PC-3 (cell line): ENCODE measurements at regions of chr2 and their contacts with region 1.

Region 1: GRCh38 chr2:159615140-159615951 is 1.0 kb downstream of the BAZ2B start:
- DNase-seq: peak; percentile 86
- ATAC-seq: peak; percentile 85
- H3K4me3 ChIP-seq: peak overlapping the region; percentile 88
- H3K27ac ChIP-seq: peak overlapping the region; percentile 81
- H3K4me1 ChIP-seq: peaks cover 35% of the 10 kb centered on the region
- H3K27me3 ChIP-seq: no peaks in the 10 kb centered on the region
- CTCF ChIP-seq: no peak

Region 2: GRCh38 chr2:159286709-159287441 is 328.5 kb before region 1 on chr2:
- CTCF ChIA-PET with region 1: no interaction called
- POLR2A ChIA-PET with region 1: no interaction called
- intact Hi-C with region 1: loop called (anchors 5 kb)
- DNase-seq: peak; percentile 98
- ATAC-seq: peak; percentile 91
- H3K4me3 ChIP-seq: peak overlapping the region; percentile 96
- H3K27ac ChIP-seq: 0 out of 2 replicates have a peak overlapping the region, but pooled peaks have one; percentile 4
- H3K4me1 ChIP-seq: peaks cover 17% of the 10 kb centered on the region; the same call in 1 of the 2 replicates
- H3K27me3 ChIP-seq: no peaks in the 10 kb centered on the region
- CTCF ChIP-seq: no peak

Region 3: GRCh38 chr2:159557451-159558034 is 57.8 kb before region 1 on chr2:
- CTCF ChIA-PET with region 1: interaction called, 12 read pairs
- POLR2A ChIA-PET with region 1: interaction called, 12 read pairs
- intact Hi-C with region 1: no loop called
- DNase-seq: peak; percentile 47
- ATAC-seq: peak; percentile 67
- H3K4me3 ChIP-seq: no peak overlapping the region
- H3K27ac ChIP-seq: no peak overlapping the region
- H3K4me1 ChIP-seq: no peaks in the 10 kb centered on the region
- H3K27me3 ChIP-seq: no peaks in the 10 kb centered on the region
- CTCF ChIP-seq: peak; percentile 70

Region 4: GRCh38 chr2:159600752-159601151 is 14.6 kb before region 1 on chr2:
- CTCF ChIA-PET with region 1: interaction called, 3 read pairs
- POLR2A ChIA-PET with region 1: interaction called, 11 read pairs
- intact Hi-C with region 1: no loop called
- DNase-seq: peak; percentile 92
- ATAC-seq: peak; percentile 98
- H3K4me3 ChIP-seq: peak overlapping the region; percentile 29; the same call in 1 of the 2 replicates
- H3K27ac ChIP-seq: peak overlapping the region; percentile 50
- H3K4me1 ChIP-seq: peaks cover 15% of the 10 kb centered on the region
- H3K27me3 ChIP-seq: no peaks in the 10 kb centered on the region
- CTCF ChIP-seq: no peak

Region 5: DNA sequence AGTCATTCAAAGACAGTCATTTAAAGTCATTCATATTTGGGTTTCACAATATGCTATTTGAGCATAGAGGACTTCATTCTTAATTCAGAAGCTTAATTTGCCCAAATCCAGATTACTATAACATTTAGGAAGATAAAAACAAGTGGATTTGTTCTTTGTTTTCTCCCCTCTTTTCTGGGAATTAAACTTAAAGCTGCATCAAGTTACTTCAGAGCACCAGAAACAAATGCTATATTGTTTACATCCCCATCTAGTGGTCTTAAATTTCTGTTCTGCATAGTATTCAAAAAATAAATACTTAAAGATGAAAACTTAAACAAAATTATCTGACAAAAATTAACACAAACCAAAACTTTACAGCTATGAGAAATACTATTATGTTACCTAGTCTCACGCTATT is 62.3 kb after region 1 on chr2:
- CTCF ChIA-PET with region 1: interaction called, 9 read pairs
- POLR2A ChIA-PET with region 1: interaction called, 23 read pairs
- intact Hi-C with region 1: no loop called
- DNase-seq: peak; percentile 30
- ATAC-seq: no peak; the same call in 1 of the 2 replicates
- H3K4me3 ChIP-seq: no peak overlapping the region
- H3K27ac ChIP-seq: no peak overlapping the region
- H3K4me1 ChIP-seq: no peaks in the 10 kb centered on the region
- H3K27me3 ChIP-seq: no peaks in the 10 kb centered on the region
- CTCF ChIP-seq: peak; percentile 66

Region 6: DNA sequence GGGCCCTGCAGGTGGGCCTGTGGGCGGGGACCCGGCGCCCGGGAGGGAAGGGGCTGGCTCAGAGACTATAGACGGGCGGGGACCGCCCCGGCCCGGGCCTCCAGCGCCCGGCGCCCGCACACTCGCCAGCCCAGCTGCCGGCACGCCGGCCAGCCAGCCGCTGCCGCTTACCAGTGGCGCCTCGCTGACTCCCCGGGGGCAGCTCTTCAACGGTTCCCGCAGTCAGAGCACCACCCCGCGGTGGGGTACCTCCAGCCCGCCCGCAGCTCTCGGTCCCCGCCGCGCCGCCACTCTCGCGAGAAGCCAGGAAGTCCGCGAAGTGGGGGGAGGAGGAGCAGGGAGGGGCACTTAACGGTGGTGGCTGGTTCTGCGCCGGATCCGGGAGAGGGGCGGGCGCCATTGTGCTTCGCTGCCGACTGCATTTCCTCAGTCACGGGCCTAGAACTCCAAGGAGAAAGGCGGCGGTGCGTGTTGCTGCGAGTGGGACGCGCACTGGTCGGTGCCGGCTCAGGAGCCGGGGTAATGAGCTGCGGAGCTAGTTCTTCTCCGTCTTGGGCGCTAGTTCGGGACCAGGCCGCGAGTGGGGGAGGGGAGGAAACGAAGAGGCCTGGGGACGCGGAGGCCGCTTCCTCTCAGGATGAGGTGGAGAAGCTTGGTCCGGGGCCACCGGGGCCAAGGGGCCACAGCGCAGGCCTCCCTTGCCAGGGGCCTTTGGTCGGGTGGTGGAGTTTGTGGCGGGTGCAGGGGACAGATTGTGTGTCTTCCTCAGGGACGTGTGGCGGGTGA is 97.0 kb after region 1 on chr2 and contains the start of gene MARCHF7:
- CTCF ChIA-PET with region 1: interaction called, 7 read pairs
- POLR2A ChIA-PET with region 1: interaction called, 8 read pairs
- intact Hi-C with region 1: loop called (anchors 1 kb)
- DNase-seq: peak; percentile 94
- ATAC-seq: peak; percentile 81
- H3K4me3 ChIP-seq: peak within 1 kb of the TSS; percentile 100
- H3K27ac ChIP-seq: peak within 1 kb of the TSS; percentile 82
- H3K4me1 ChIP-seq: peaks cover 30% of the 10 kb centered on the region
- H3K27me3 ChIP-seq: no peaks in the 10 kb centered on the region
- CTCF ChIP-seq: peak; percentile 61
- total RNA-seq, gene MARCHF7: 53.2 and 84.3 TPM in 2 replicates

Region 7: GRCh38 chr2:160224060-160224459 is 608.7 kb after region 1 on chr2:
- CTCF ChIA-PET with region 1: interaction called, 10 read pairs
- POLR2A ChIA-PET with region 1: no interaction called
- intact Hi-C with region 1: no loop called
- DNase-seq: peak; percentile 96
- ATAC-seq: peak; percentile 69
- H3K4me3 ChIP-seq: peak overlapping the region; percentile 28; the same call in 1 of the 2 replicates
- H3K27ac ChIP-seq: peak overlapping the region; percentile 87
- H3K4me1 ChIP-seq: peaks cover 94% of the 10 kb centered on the region
- H3K27me3 ChIP-seq: no peaks in the 10 kb centered on the region
- CTCF ChIP-seq: no peak